MCF 10A (cell line): ENCODE measurements at regions of chr7 and their contacts with region 1.

Region 1: DNA sequence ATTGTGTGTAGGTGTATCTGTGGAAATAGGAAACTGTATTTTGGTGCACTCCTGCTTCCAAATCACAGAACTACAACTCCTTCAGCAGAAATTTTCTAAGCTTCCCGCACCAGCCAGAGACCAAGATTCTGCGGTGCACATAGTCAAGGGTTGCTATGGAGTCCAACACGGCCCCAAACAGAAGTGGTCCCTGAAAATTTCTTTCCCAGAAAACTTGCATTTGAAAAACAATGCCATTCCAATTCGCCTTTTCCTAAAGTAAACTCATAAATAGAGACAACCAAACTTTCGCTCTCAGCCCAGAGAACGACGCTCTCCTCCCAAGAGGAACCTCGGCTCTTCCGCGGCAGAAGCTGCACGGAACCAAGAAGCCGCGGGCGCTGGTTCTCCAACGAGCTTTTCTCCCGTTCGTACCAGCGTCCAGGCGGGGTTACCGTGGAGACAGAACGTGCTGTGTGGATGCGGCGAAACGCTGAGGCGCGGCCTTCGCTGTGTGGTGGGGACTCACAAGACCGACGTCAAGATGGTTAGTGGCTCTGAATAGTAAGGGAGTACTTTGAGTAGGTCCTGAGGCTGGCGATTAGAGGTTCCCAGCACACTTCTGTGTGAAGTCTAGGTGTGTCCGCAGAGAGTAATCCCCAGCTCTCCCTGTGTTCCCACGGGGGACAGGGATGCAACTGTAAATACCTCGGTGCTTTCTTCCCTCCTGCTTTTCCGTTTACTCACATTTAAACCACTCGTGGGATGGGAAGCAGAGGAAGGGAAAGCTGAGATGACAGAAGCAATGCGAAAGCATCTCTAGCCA is 24.0 kb upstream of the ZC3HAV1 start:
- DNase-seq: peak; percentile 86
- H3K4me3 Mint-ChIP-seq: peak overlapping the region; percentile 79
- H3K27ac Mint-ChIP-seq: peak overlapping the region; percentile 88
- H3K4me1 Mint-ChIP-seq: no peaks in the 10 kb centered on the region
- H3K27me3 Mint-ChIP-seq: peaks cover 4% of the 10 kb centered on the region
- CTCF ChIP-seq: no peak

Region 2: DNA sequence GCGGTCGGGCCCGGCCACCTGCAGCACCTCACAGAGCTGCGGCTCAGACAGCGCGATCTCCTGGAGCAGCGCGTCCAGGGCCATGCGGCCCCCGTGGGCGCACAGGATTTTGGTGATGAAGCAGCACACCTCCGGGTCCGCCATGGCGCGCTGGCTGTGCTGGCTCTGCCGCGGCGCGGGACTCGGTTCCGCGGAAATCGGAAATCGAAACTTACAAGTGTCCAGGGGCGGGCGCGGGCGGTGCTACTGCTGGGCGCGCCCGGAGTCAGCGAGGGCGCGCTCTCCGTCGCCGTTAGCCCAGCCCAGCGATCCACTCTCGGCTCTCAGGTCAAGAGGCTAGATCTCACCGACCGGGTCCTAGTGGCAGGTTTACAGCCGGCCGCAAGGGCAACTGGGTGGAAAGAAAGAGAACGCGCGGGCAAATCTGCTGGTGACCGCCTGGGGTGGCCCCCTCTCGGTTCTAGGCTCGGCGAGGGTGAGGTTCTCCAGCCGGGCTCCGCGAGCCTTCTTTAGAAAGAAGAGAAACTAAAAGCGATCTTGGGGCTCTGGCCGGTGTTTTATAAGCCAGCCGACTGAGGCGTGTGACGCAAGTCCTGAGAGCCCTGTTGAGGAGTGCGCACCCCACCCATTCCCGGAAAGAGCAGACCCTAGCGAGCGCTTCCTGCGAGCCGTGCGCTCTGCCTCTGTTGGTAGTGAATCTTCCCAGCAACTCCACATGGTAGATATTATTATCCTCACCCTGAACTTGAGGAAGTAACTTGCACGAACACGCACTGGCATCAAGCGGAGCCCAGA is 24.2 kb before region 1 on chr7 and contains the start of gene ZC3HAV1:
- CTCF ChIA-PET with region 1: interaction called, 5 read pairs
- POLR2A ChIA-PET with region 1: interaction called, 17 read pairs
- intact Hi-C with region 1: no loop called
- DNase-seq: peak; percentile 83
- H3K4me3 Mint-ChIP-seq: peak within 1 kb of the TSS; percentile 95
- H3K27ac Mint-ChIP-seq: peak within 1 kb of the TSS; percentile 91
- H3K4me1 Mint-ChIP-seq: peaks cover 33% of the 10 kb centered on the region
- H3K27me3 Mint-ChIP-seq: no peaks in the 10 kb centered on the region
- CTCF ChIP-seq: no peak
- total RNA-seq, gene ZC3HAV1: 14.2 and 25.7 TPM in 2 replicates

Region 3: DNA sequence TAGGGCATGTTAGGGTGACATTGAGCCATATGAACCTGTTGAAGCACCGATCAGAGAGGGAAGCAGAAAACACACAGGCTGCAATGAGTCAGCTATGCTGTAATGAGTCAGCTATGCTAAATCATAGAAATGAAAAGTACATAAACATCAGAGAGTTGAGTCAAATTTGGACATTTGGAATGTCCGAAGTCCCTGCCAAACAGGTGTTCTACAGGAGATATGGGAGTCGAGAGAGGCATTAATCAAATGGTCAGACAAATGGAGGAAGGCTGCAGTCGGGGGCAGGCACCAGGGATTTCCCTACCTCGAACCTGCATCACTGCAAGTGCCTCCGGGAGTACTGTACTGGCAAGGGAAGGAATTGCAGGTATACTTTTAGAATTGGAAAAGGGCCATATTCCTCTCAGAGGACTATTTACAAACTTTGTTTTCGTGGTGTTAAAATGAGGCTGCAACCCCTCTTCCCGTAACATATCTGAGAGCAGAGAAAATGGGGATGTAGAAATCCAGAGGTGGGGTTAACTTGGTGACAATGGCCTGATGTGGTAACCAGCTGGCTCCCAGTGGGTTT is 15.2 kb before region 1 on chr7:
- CTCF ChIA-PET with region 1: no interaction called
- POLR2A ChIA-PET with region 1: interaction called, 17 read pairs
- intact Hi-C with region 1: no loop called
- DNase-seq: peak; percentile 81
- H3K4me3 Mint-ChIP-seq: peak overlapping the region; percentile 51
- H3K27ac Mint-ChIP-seq: peak overlapping the region; percentile 47
- H3K4me1 Mint-ChIP-seq: peaks cover 18% of the 10 kb centered on the region
- H3K27me3 Mint-ChIP-seq: peaks cover 3% of the 10 kb centered on the region
- CTCF ChIP-seq: no peak